ENCODE measurements at regions of chr11 and their contacts with region 1.

Region 1: GRCh38 chr11:30392221-30392784 is 69.4 kb downstream of the ARL14EP start:
- DNase-seq: no peak
- ATAC-seq: no peak
- H3K4me3 ChIP-seq: no peak overlapping the region
- H3K27ac ChIP-seq: no peak overlapping the region
- H3K4me1 ChIP-seq: no peaks in the 10 kb centered on the region
- H3K27me3 ChIP-seq: no peaks in the 10 kb centered on the region; a peak in 1 of 5 replicates
- CTCF ChIP-seq: no peak
- EP300 ChIP-seq: no peak
- POLR2A ChIP-seq: no peak
- RAD21 ChIP-seq: no peak

Region 2: GRCh38 chr11:30282289-30282631 is 110.0 kb before region 1 on chr11:
- CTCF ChIA-PET with region 1: no interaction called
- POLR2A ChIA-PET with region 1: no interaction called
- in situ Hi-C with region 1: no loop called
- intact Hi-C with region 1: no loop called
- DNase-seq: no peak
- ATAC-seq: no peak
- H3K4me3 ChIP-seq: no peak overlapping the region
- H3K27ac ChIP-seq: no peak overlapping the region
- H3K4me1 ChIP-seq: no peaks in the 10 kb centered on the region
- H3K27me3 ChIP-seq: no peaks in the 10 kb centered on the region
- CTCF ChIP-seq: no peak
- EP300 ChIP-seq: no peak
- POLR2A ChIP-seq: no peak
- RAD21 ChIP-seq: no peak

Region 3: GRCh38 chr11:30377347-30377746 is 15.0 kb before region 1 on chr11:
- CTCF ChIA-PET with region 1: no interaction called
- POLR2A ChIA-PET with region 1: no interaction called
- in situ Hi-C with region 1: no loop called
- intact Hi-C with region 1: loop called (anchors 1 kb)
- DNase-seq: no peak
- ATAC-seq: no peak
- H3K4me3 ChIP-seq: no peak overlapping the region
- H3K27ac ChIP-seq: no peak overlapping the region
- H3K4me1 ChIP-seq: no peaks in the 10 kb centered on the region
- H3K27me3 ChIP-seq: no peaks in the 10 kb centered on the region
- CTCF ChIP-seq: no peak
- EP300 ChIP-seq: no peak
- POLR2A ChIP-seq: no peak
- RAD21 ChIP-seq: no peak

Measured in HepG2 (cell line).